Activated T-helper 2 cell treated with anti-CD3 and anti-CD28 coated beads, Interferon-gamma antibody, Interleukin-2, Interleukin-4, amounts not matched to agents 10 μg/mL and 5 μg/mL and 100 μg/mL, durations not matched to agents 14 hours and 24 hours and 36 hours (primary cell): ENCODE measurements at regions of chrX and their contacts with region 1.

Region 1: GRCh38 chrX:9285342-9285771 is 179.5 kb upstream of the TBL1X start:
- DNase-seq: peak; percentile 11
- H3K4me3 Mint-ChIP-seq: peak overlapping the region; percentile 60
- H3K27ac Mint-ChIP-seq: peak overlapping the region; percentile 92
- H3K4me1 Mint-ChIP-seq: peaks cover 32% of the 10 kb centered on the region
- H3K27me3 Mint-ChIP-seq: no peaks in the 10 kb centered on the region

Region 2: DNA sequence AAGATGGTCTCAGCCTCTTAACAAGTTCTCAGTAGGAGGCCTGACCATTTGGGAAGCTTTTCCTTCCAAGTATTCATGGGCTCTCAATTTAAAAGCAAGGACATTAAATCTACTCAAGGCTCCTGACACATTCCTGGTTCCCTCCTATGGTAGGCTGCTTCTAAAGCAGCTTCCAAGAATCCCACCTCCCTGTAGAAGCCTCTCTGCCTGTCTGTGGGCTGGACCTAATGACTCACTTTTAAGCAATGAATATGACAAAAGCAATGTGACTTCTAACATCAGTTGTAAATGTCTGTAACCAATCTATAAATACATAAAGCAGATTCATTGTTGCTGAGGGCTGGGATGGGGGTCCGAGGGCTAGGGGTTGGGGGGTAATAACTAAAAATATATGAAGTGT is 151.9 kb before region 1 on chrX:
- intact Hi-C with region 1: loop called (anchors 1 kb)
- DNase-seq: no peak
- H3K4me3 Mint-ChIP-seq: no peak overlapping the region
- H3K27ac Mint-ChIP-seq: no peak overlapping the region
- H3K4me1 Mint-ChIP-seq: peaks cover 12% of the 10 kb centered on the region
- H3K27me3 Mint-ChIP-seq: no peaks in the 10 kb centered on the region

Region 3: GRCh38 chrX:9231491-9231890 is 53.9 kb before region 1 on chrX:
- intact Hi-C with region 1: loop called (anchors 2 kb)
- DNase-seq: no peak
- H3K4me3 Mint-ChIP-seq: no peak overlapping the region
- H3K27ac Mint-ChIP-seq: no peak overlapping the region
- H3K4me1 Mint-ChIP-seq: peaks cover 10% of the 10 kb centered on the region
- H3K27me3 Mint-ChIP-seq: peaks cover 2% of the 10 kb centered on the region

Region 4: DNA sequence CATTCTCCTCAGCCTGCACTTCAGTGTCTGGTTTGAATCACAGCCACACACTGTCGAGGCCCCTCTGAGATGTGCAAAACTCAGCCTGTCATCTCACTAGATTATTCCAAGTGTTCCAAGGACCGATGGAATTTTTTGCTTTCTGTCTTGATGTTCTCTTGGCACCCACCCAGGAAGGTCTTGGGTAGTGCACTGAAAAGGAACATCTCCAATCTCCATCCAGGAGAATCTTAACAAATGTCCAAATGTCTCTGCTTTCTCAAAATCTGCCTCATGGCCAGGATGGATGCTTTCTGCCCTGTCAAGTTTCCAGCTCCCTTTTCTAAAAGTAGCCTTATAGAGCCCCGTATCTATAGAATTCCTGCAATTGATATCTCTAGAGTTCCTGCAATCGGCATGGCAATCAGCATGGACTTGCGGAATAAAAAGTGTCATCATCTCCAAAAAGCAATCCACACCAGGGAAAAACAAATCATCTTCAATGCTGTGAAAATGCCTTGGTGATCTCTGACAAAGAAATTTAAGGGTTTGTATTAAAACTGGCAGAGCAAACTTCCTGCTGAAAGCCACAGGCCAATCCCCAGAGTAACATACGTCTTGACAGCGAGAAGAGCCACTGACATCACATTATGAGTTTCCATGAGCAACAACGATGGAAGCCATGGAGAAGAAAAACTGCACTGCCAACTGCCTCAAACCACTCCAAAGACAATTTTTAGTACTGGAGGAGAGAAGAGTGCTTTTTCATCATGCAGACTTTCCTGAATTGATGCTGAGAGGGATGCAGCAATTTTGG is 36.1 kb before region 1 on chrX:
- intact Hi-C with region 1: no loop called
- DNase-seq: no peak
- H3K4me3 Mint-ChIP-seq: no peak overlapping the region
- H3K27ac Mint-ChIP-seq: no peak overlapping the region
- H3K4me1 Mint-ChIP-seq: peaks cover 10% of the 10 kb centered on the region
- H3K27me3 Mint-ChIP-seq: no peaks in the 10 kb centered on the region

Region 5: GRCh38 chrX:9341291-9342201 is 56.2 kb after region 1 on chrX:
- intact Hi-C with region 1: loop called (anchors 1 kb)
- DNase-seq: peak; percentile 49
- H3K4me3 Mint-ChIP-seq: peak overlapping the region; percentile 58
- H3K27ac Mint-ChIP-seq: peak overlapping the region; percentile 90
- H3K4me1 Mint-ChIP-seq: peaks cover 34% of the 10 kb centered on the region
- H3K27me3 Mint-ChIP-seq: no peaks in the 10 kb centered on the region

Region 6: DNA sequence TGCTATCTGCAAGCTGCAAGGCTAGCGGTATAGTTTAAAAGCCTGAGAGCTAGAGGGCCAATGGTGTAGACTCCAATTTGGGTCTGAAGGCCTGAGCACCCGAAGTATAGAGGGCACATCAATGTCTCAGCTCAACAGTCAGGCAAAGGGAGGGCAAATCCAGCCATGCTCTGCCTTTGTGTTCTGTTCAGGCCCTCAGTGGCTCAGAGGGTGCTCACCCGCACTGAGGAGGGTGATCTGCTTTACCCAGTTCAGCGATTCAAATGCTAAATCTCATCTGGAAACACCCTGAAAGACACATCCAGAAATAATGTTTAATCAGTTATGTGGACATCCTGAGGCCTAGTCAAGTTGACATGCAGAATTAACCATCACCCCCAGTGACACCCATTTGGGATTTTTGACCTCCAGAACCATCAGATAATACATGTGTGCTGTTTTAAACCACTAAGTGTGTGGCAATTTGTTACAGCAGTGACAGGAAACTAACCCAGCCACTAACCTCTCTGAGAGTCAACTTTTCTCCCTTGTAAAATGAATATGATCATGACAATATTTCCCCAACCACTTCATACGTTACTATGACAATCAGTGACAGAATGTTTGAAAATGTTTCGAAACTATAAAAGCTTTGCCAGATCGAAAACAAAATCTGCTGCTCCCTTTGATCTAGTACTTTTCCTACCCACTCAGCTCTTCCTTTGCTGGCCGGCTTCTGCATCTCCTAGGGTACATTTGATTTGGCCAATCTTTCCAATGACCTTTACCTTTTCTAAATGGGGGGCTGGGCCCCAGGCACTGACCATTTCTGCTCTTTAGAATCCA is 171.1 kb after region 1 on chrX:
- intact Hi-C with region 1: loop called (anchors 2 kb)
- DNase-seq: peak; percentile 27
- H3K4me3 Mint-ChIP-seq: no peak overlapping the region
- H3K27ac Mint-ChIP-seq: peak overlapping the region; percentile 90
- H3K4me1 Mint-ChIP-seq: peaks cover 28% of the 10 kb centered on the region
- H3K27me3 Mint-ChIP-seq: no peaks in the 10 kb centered on the region